ENCODE measurements at regions of chr9 and their contacts with region 1.

Region 1: DNA sequence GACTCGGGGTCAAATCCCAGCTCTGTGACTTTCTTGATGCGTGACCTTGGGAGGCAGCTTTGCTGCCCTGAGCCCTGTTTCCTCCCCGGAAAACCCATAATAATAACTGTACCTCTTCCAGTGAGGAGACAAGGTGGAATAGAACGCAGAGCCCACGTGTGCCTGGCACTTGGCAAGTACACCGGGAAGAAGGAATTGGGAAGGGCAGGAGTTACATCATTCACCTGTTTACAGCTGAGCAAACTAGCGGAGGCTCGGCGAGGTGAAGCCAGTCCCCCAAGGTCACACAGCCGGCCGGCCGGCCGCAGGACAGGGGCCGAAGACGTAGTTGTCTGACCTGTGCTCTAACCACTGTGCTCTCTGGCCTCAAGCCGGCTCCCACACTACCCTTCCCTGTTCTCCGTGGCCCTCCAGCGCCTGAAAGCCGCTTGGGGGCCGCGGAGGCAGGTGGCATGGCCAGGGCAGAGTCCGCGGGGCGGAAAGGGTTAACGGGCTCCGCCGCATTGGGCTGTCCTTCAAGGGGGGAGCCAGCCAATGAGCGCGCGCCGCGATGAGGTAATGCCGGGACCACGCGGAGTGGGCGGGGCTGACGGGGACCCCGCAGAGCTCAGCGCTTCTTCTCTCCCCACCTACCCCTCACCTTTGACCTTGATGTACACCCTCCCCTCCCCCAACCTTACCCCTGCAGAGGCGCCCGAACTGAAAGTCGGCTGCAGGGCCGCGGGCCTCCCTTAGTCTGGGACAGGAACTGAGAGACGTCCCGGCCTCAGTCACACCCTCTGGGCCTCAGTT is 125.2 kb downstream of the C9orf50 start:
- DNase-seq: peak; percentile 96 to 97
- ATAC-seq: peak; percentile 82 to 93 (median 90)
- H3K4me3 ChIP-seq: peak overlapping the region; percentile 35 to 66 (median 54)
- H3K27ac ChIP-seq: peak overlapping the region; percentile 92 to 100 (median 98)
- H3K4me1 ChIP-seq: peaks cover 19 to 91% (median 67%) of the 10 kb centered on the region in 9 donors
- H3K27me3 ChIP-seq: no peaks in the 10 kb centered on the region
- CTCF ChIP-seq: no peak

Region 2: GRCh38 chr9:129177791-129178559 is 317.8 kb before region 1 on chr9 and contains the start of gene IER5L:
- intact Hi-C with region 1: loop called in 6 of 10 experiments (anchors 2 to 10 kb)
- DNase-seq: peak; percentile 94
- ATAC-seq: peak; percentile 80 to 91 (median 84)
- H3K4me3 ChIP-seq: peak within 1 kb of the TSS; percentile 72 to 100 (median 96)
- H3K27ac ChIP-seq: peak within 1 kb of the TSS; percentile 96 to 100 (median 98)
- H3K4me1 ChIP-seq: peaks cover 11 to 40% (median 29%) of the 10 kb centered on the region in 9 donors
- H3K27me3 ChIP-seq: peaks cover 0 to 6% (median 0%) of the 10 kb centered on the region in 7 donors
- CTCF ChIP-seq: peak in 3 of 9 donors; percentile 7 to 11 (median 10)
- total RNA-seq, gene IER5L: 1.2 to 13.7 (median 5.6) TPM

Region 3: DNA sequence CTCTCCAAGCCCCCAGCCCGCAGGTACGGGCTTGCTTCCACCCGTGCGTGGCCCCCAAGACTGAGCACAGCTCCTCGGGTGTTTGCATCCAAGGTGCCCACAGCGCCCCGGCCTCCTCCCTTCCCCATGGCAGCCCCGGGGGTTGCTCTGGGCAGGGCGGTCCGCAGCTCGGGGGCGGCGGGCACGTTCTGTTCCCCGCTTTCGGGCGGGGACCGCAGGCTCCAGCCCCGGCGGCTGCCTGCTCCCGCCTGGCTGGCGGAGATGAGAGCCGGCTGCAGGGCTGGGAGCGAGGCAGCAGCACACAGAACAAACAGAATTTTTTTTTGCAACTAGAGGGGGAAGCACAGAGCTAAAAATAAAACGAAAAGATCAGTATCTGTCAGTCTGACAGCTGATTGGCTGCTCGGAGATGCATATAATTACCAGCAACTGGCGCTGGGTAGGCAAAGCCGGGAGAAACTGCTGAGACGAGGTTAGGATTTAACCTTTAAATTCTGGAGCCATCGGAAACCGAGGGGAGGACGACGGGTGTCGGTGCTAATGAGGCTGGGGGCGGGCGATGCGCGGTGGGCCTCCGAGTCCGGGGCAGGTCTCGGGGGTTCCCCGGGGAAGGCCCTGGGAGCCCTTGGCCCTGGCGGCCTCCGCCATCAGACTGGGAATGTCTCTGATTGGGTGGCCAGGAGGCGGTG is 175.0 kb before region 1 on chr9:
- intact Hi-C with region 1: loop called in 1 of 10 experiments (anchors 5 kb)
- DNase-seq: peak; percentile 68 to 74
- ATAC-seq: peak; percentile 76 to 85 (median 83)
- H3K4me3 ChIP-seq: peak overlapping the region; percentile 3 to 63 (median 51)
- H3K27ac ChIP-seq: peak overlapping the region; percentile 85 to 95 (median 90)
- H3K4me1 ChIP-seq: peaks cover 29 to 85% (median 61%) of the 10 kb centered on the region in 9 donors
- H3K27me3 ChIP-seq: no peaks in the 10 kb centered on the region
- CTCF ChIP-seq: peak in 8 of 9 donors; percentile 6 to 47 (median 38)

Region 4: DNA sequence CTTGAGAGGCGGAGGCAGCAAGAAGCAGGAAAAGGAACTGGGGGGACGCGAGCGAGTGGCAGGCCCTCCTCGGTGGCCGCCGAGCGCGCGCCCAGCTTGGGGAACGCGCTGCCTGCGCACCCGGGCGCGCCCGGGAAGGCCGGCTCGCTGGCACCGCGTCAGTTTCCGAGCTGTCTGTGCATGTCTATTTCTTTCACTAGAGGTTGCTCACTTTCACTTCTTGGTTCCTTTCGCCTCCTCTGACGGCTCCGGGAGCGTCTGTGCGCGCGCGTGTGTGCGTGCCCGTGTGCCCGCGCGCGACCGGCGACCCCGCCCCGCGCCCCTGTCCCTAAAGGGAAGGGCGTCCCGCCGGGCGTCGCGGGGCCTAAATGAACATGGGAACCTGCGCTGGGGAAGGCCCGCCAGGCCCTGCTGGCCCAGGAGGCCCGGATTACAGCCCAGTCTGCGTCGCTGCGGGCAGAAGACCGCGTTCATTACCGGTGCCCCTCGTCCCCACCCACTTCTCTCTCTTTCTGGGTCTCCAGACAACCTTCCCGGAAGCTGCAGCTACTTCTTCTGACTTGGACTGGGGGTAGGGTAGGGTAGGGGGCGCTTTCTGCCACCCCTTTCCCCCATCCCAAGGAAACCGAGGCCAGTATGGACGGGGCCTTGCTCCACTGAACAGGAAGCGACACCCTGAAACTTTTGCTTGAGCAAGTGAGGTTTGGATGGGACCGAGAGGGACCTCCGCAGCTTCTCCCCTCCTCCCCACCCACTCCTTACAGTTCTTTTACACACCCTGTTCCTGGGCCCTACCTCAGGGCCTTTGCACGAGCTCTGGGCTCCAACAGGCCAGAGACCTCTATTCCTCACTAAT is 111.9 kb before region 1 on chr9:
- intact Hi-C with region 1: loop called in 1 of 10 experiments (anchors 5 kb)
- DNase-seq: peak; percentile 87 to 88
- ATAC-seq: peak; percentile 87 to 94 (median 89)
- H3K4me3 ChIP-seq: peak overlapping the region; percentile 16 to 75 (median 60)
- H3K27ac ChIP-seq: peak overlapping the region; percentile 90 to 99 (median 96)
- H3K4me1 ChIP-seq: peaks cover 6 to 22% (median 17%) of the 10 kb centered on the region in 9 donors
- H3K27me3 ChIP-seq: no peaks in the 10 kb centered on the region
- CTCF ChIP-seq: peak in 6 of 9 donors; percentile 12 to 55 (median 36)

Region 5: GRCh38 chr9:129460323-129461261 is 35.1 kb before region 1 on chr9:
- intact Hi-C with region 1: loop called in 2 of 10 experiments (anchors 5 kb)
- DNase-seq: peak; percentile 95 to 98
- ATAC-seq: peak; percentile 88 to 95 (median 91)
- H3K4me3 ChIP-seq: peak overlapping the region in 9 of 10 donors; percentile 30 to 57 (median 50)
- H3K27ac ChIP-seq: peak overlapping the region; percentile 86 to 100 (median 98)
- H3K4me1 ChIP-seq: peaks cover 28 to 52% (median 46%) of the 10 kb centered on the region in 9 donors
- H3K27me3 ChIP-seq: no peaks in the 10 kb centered on the region
- CTCF ChIP-seq: peak in 5 of 9 donors; percentile 11 to 59 (median 31)

Region 6: GRCh38 chr9:129569502-129570449 is 74.0 kb after region 1 on chr9:
- intact Hi-C with region 1: loop called in 2 of 10 experiments (anchors 5 kb)
- DNase-seq: no peak
- ATAC-seq: peak in 7 of 8 donors; percentile 11 to 57 (median 41)
- H3K4me3 ChIP-seq: peak overlapping the region in 8 of 10 donors; percentile 46 to 60 (median 53)
- H3K27ac ChIP-seq: peak overlapping the region in 9 of 10 donors; percentile 38 to 82 (median 78)
- H3K4me1 ChIP-seq: peaks cover 12 to 38% (median 29%) of the 10 kb centered on the region in 9 donors
- H3K27me3 ChIP-seq: peaks cover 0 to 32% (median 0%) of the 10 kb centered on the region in 7 donors
- CTCF ChIP-seq: peak in 7 of 9 donors; percentile 35 to 56 (median 43)

Region 7: DNA sequence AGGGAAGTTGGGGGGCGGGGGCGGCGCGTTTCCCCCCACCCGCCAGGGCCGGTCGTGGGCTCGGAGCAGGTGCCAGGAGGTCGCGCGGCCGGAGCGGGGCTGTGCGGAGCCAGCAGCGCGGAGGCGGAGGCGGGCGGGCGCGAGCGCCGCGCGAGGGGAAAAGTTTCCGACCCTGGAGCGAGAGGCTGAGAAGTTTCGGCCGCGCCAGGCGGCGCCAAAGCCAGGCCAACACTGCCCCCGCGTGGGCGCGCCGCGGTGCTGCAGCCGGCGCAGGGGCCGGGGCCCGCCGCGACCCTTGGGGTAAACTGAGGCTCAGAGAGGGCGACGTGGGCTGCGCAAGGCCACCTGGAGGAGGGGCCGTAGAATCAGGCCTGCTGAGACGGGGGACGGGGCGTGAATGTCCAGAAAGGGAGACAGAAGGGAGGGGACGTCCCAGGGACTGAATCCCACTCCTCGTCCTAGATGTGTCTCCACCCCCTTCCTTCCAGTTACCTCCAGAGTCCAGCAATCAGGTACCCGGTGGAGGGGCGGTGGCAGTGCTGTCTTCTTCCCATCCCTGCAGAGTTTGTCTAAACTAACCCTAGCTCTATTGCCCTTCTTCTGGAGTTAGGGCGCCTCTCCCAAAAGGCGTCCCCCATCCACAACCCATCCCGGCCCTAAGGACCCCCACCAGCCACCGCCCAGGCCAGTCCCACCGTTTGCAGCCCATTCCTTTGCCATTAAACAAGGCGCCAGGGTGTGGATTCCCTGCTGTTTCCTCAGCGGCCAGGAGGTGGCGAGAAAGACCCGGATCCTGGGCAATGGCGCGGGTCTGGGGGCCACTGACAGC is 115.0 kb after region 1 on chr9:
- intact Hi-C with region 1: loop called in 6 of 10 experiments (anchors 2 to 10 kb)
- DNase-seq: peak; percentile 79 to 87
- ATAC-seq: peak; percentile 28 to 75 (median 48)
- H3K4me3 ChIP-seq: peak overlapping the region; percentile 32 to 77 (median 64)
- H3K27ac ChIP-seq: peak overlapping the region; percentile 81 to 98 (median 94)
- H3K4me1 ChIP-seq: peaks cover 32 to 51% (median 43%) of the 10 kb centered on the region in 9 donors
- H3K27me3 ChIP-seq: no peaks in the 10 kb centered on the region
- CTCF ChIP-seq: peak; percentile 74 to 99 (median 87)

Region 8: DNA sequence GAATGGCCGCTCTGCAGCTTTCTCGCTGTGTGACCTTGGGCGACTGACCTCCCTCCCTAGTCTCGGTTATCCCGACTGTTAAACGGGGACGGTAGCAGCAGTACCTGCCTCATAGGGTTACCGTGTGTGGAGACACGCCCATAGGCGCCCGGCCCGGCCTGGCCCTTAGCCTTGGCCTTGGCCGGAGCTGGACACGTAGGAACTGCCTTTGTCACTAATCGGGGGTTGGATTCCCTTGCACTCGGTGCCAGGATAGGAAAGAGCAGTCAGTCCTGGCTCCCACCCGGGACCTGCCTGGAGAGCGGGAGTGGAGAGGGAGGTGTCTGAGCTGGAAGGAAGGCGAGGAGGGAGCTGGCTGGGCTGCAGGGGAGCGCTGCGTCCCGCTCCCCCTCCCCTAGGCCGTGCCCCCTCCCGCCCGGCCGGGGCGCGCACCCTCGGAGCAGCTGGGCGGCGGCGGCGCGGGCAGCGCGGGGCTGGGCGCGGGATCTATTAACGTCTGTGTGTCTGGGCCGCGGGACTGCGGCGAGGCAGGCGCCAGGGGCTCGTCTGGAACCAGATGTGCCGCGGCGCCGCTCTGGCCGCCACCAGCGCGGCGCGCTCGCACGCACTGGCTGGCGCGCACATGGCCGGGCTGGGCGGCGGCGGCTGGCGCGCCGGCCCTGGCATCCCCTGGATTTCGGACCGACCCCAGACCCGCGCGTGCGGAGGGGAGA is 201.4 kb after region 1 on chr9:
- intact Hi-C with region 1: no loop called
- DNase-seq: peak; percentile 34 to 35
- ATAC-seq: peak in 7 of 8 donors; percentile 28 to 77 (median 64)
- H3K4me3 ChIP-seq: peak overlapping the region in 9 of 10 donors; percentile 26 to 51 (median 42)
- H3K27ac ChIP-seq: peak overlapping the region in 8 of 10 donors; percentile 25 to 78 (median 68)
- H3K4me1 ChIP-seq: peaks cover 0 to 15% (median 5%) of the 10 kb centered on the region in 9 donors
- H3K27me3 ChIP-seq: peaks cover 0 to 48% (median 22%) of the 10 kb centered on the region in 7 donors
- CTCF ChIP-seq: no peak

Region 9: GRCh38 chr9:129835021-129835871 is 339.5 kb after region 1 on chr9 and contains the starts of genes C9orf78 and USP20:
- intact Hi-C with region 1: no loop called
- DNase-seq: peak; percentile 95 to 98
- ATAC-seq: peak; percentile 99 to 100 (median 100)
- H3K4me3 ChIP-seq: peak within 1 kb of the TSS; percentile 71 to 99 (median 94)
- H3K27ac ChIP-seq: peak within 1 kb of the TSS; percentile 52 to 94 (median 85)
- H3K4me1 ChIP-seq: peaks cover 0 to 41% (median 27%) of the 10 kb centered on the region in 9 donors
- H3K27me3 ChIP-seq: no peaks in the 10 kb centered on the region
- CTCF ChIP-seq: peak in 2 of 9 donors; percentile 18 to 30
- total RNA-seq, gene C9orf78: 25.7 to 34.6 (median 30.5) TPM
- total RNA-seq, gene USP20: 10.9 to 16.8 (median 12.5) TPM

Measured in heart right ventricle (tissue), 16 donors.